ENCODE measurements at regions of chr10 and their contacts with region 1.

Region 1: GRCh38 chr10:24449321-24449740 is 240.4 kb downstream of the KIAA1217 start:
- DNase-seq: peak; percentile 57
- H3K4me3 Mint-ChIP-seq: peak overlapping the region; percentile 0
- H3K27ac Mint-ChIP-seq: peak overlapping the region; percentile 49
- H3K4me1 Mint-ChIP-seq: peaks cover 28% of the 10 kb centered on the region
- H3K27me3 Mint-ChIP-seq: peaks cover 33% of the 10 kb centered on the region

Region 2: GRCh38 chr10:24383681-24384106 is 65.6 kb before region 1 on chr10:
- intact Hi-C with region 1: loop called (anchors 1 kb)
- DNase-seq: peak; percentile 80
- H3K4me3 Mint-ChIP-seq: no peak overlapping the region
- H3K27ac Mint-ChIP-seq: peak overlapping the region; percentile 90
- H3K4me1 Mint-ChIP-seq: peaks cover 12% of the 10 kb centered on the region
- H3K27me3 Mint-ChIP-seq: no peaks in the 10 kb centered on the region

Region 3: DNA sequence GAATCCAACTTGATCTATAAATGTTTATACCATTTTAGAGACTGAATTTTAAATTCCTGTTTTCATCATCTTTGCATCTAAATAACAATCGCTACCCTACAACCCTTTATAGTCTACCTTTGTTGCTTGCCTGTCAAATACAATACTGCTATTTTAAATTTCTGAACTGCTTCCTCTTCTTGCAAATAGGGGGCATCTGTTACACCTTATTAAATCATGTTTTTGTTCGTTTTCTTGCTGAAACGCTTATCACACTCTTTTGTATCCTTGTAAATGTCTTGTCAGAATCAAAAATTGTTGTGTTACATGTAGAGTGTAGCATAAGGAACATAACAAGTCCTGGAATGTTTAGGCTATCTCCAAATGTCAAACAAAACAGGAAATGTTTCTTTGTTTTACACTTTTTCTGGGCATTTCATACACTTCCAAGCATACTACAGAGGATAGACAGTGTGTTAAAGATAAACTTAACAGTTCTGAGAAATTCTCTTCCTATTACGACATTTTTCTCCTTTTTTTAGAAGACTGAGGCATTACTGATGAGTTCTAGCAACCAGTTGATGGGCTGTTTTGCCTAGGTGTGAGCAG is 1006.7 kb after region 1 on chr10:
- intact Hi-C with region 1: no loop called
- DNase-seq: no peak
- H3K4me3 Mint-ChIP-seq: no peak overlapping the region
- H3K27ac Mint-ChIP-seq: no peak overlapping the region
- H3K4me1 Mint-ChIP-seq: no peaks in the 10 kb centered on the region
- H3K27me3 Mint-ChIP-seq: no peaks in the 10 kb centered on the region

Measured in activated CD4-positive, alpha-beta T cell treated with anti-CD3 and anti-CD28 coated beads, Interleukin-2, amount 10 ng/mL, durations not matched to agents 24 days and 14 days (primary cell).